CD8-positive, alpha-beta T cell (primary cell): ENCODE measurements at regions of chr15 and their contacts with region 1.

Region 1: GRCh38 chr15:96273317-96274086 is 57.0 kb upstream of the NR2F2 start:
- DNase-seq: no peak
- ATAC-seq: no peak
- H3K4me3 ChIP-seq: no peak overlapping the region
- H3K4me3 Mint-ChIP-seq: no peak overlapping the region
- H3K27ac ChIP-seq: no peak overlapping the region
- H3K27ac Mint-ChIP-seq: no peak overlapping the region
- H3K4me1 ChIP-seq: no peaks in the 10 kb centered on the region
- H3K4me1 Mint-ChIP-seq: no peaks in the 10 kb centered on the region
- H3K27me3 ChIP-seq: no peaks in the 10 kb centered on the region
- H3K27me3 Mint-ChIP-seq: no peaks in the 10 kb centered on the region
- CTCF ChIP-seq: no peak

Region 2: DNA sequence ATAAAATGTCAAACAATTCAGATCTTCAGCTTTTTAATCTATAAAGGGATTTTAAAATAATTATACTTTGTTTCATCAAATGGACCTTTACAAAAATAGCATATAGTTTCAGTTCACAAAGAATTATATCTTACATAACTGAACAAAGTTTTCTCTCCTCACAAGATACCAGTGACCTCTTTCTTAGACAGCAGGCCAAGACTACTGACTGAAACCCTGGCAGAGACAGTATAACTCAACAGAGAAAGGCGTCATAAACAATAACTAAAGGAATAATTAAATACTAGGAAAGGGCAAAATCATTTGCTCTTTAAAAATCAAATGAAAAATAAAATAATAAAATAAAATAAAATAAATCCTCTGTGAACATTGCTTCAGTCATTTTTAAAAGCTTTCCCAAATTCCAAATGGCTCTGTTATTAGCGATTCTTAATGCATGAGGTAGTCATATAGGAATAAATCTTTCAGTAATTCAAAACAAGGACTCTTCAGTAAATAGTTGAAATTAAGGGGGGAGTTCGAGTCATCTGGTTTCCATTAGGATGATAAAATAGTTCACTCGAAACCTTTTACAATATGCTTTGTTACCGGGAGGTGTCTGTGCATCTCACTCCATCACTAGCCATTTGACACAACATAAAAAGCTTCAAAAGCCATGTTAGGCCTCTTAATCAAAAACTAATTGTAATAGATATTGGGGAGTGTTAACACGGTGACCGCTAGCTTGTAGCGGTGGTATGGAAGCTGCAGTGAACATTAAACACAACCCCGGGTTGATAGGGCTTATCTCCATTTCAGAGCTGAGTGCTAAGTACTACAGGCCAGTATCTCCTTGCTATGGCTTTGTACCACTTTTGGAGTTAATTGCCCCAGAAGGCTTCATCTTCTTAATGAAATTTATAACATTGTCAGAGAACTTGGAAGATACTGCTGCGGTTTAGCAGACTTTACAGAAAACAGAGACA is 85.9 kb before region 1 on chr15:
- CTCF ChIA-PET with region 1: no interaction called
- POLR2A ChIA-PET with region 1: no interaction called
- intact Hi-C with region 1: no loop called
- DNase-seq: no peak
- ATAC-seq: no peak
- H3K4me3 ChIP-seq: no peak overlapping the region
- H3K4me3 Mint-ChIP-seq: no peak overlapping the region
- H3K27ac ChIP-seq: no peak overlapping the region
- H3K27ac Mint-ChIP-seq: no peak overlapping the region
- H3K4me1 ChIP-seq: no peaks in the 10 kb centered on the region
- H3K4me1 Mint-ChIP-seq: no peaks in the 10 kb centered on the region
- H3K27me3 ChIP-seq: no peaks in the 10 kb centered on the region
- H3K27me3 Mint-ChIP-seq: no peaks in the 10 kb centered on the region
- CTCF ChIP-seq: no peak

Region 3: DNA sequence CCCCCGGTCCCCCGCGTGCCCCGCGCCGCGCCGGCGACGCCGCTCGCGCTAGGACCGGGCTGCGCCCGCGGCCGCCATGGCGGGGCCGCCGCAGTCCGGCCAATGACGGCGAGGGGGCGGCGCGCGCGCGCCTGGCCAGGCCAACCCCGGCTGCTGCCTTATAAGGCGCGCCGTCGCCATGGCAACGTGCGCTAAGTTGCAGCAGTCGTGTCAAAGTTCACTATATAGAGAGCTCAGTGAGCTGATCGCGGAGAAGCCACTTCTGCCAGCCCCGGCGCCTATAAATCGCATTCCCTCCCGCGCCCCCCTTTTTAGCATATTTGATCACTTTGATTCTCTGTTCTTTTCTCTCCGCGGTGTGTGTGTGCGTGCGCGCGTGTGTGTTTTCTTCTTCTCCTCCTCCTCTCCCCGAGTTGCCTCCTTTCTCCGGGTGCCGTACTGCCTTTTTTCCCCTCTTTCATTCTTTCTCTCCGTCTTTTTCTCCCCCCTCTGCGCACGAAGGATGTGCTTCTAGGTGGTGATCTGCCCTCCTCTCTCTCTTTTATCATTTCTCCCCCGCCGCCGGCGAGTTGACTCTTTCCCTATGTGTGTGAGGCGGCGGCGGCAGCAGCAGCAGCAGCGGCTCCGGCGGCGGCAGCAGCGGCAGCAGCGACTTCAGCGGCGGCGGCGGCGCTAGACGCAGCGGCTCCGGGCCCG is 57.1 kb after region 1 on chr15 and contains the start of gene NR2F2:
- CTCF ChIA-PET with region 1: no interaction called
- POLR2A ChIA-PET with region 1: no interaction called
- intact Hi-C with region 1: loop called in 1 of 2 experiments (anchors 10 kb)
- DNase-seq: peak in 5 of 9 experiments; percentile 3 to 70 (median 46)
- ATAC-seq: peak; percentile 71
- H3K4me3 ChIP-seq: peak within 1 kb of the TSS; percentile 34 to 57
- H3K4me3 Mint-ChIP-seq: peak within 1 kb of the TSS; percentile 78
- H3K27ac ChIP-seq: no peak within 1 kb of the TSS
- H3K27ac Mint-ChIP-seq: no peak within 1 kb of the TSS
- H3K4me1 ChIP-seq: peaks cover 13% of the 10 kb centered on the region
- H3K4me1 Mint-ChIP-seq: peaks cover 25% of the 10 kb centered on the region
- H3K27me3 ChIP-seq: peaks cover 41 to 42% of the 10 kb centered on the region in 2 experiments
- H3K27me3 Mint-ChIP-seq: peaks cover 75% of the 10 kb centered on the region
- CTCF ChIP-seq: no peak
- total RNA-seq, gene NR2F2: not detected